ENCODE measurements at regions of chr1 and their contacts with region 1.

Region 1: GRCh38 chr1:244272471-244273261 is 179.0 kb downstream of the ADSS2 start:
- DNase-seq: peak; percentile 81
- ATAC-seq: peak; percentile 67
- H3K4me3 ChIP-seq: no peak overlapping the region
- H3K27ac ChIP-seq: no peak overlapping the region
- H3K4me1 ChIP-seq: peaks cover 9 to 15% of the 10 kb centered on the region in 2 experiments; a peak in 3 of 4 replicates
- H3K27me3 ChIP-seq: no peaks in the 10 kb centered on the region
- CTCF ChIP-seq: peak; percentile 87 to 100 (median 99)
- POLR2A ChIP-seq: no peak
- RAD21 ChIP-seq: peak; percentile 100

Region 2: DNA sequence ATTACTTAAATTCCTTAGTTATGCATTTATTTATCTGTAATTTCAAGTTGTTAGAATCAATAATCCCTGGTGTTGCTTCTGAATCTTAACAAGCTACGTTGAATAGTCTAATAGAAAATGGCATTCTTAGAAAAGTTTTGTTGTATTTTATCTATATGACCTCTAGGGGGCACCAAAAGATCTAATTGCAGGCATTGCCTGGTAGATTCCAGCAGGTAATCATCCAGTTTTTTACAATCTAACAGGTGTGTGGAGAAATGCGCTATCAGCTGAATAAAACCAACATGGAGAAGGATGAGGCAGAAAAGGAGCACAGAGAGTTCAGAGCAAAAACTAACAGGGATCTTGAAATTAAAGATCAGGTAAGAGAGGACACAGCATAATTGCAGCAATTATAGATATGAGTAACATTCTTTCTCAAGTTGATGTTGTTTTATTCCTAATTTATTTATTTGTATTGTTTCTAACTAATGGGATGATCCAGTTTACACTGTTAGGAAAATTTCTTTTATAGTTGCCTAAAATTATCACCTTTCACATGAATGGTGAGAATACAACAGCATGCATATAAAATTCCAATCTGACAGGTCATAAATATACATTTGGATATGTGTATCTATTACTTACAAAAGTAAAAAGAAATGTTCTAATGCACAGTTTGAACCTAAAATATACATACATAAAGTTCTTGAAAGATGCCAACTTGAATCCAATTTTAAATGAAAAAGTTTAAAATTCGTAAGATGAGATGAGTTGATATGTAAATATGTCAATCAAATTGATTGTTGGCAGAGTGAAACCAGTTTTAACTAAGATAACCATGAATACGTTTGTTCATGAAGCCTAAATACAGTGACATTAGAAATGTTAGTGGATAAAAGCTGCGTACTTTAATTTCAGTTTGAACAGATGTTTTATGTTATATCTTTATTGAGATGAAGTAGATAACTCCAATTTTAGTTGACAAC is 928.4 kb before region 1 on chr1:
- CTCF ChIA-PET with region 1: interaction called, 10 read pairs
- POLR2A ChIA-PET with region 1: no interaction called
- RAD21 ChIA-PET with region 1: no interaction called
- intact Hi-C with region 1: loop called (anchors 1 kb)
- DNase-seq: peak; percentile 8
- ATAC-seq: peak; percentile 59
- H3K4me3 ChIP-seq: no peak overlapping the region
- H3K27ac ChIP-seq: no peak overlapping the region
- H3K4me1 ChIP-seq: no peaks in the 10 kb centered on the region
- H3K27me3 ChIP-seq: no peaks in the 10 kb centered on the region
- CTCF ChIP-seq: peak; percentile 47 to 79 (median 75); a peak in 5 of 6 replicates
- POLR2A ChIP-seq: no peak
- RAD21 ChIP-seq: peak; percentile 78

Region 3: GRCh38 chr1:243708210-243708609 is 564.5 kb before region 1 on chr1:
- CTCF ChIA-PET with region 1: interaction called, 9 read pairs
- POLR2A ChIA-PET with region 1: no interaction called
- RAD21 ChIA-PET with region 1: interaction called in 1 of 2 experiments, 3 read pairs
- intact Hi-C with region 1: loop called (anchors 1 kb)
- DNase-seq: no peak
- ATAC-seq: no peak
- H3K4me3 ChIP-seq: no peak overlapping the region
- H3K27ac ChIP-seq: no peak overlapping the region
- H3K4me1 ChIP-seq: no peaks in the 10 kb centered on the region
- H3K27me3 ChIP-seq: peaks cover 54% of the 10 kb centered on the region
- CTCF ChIP-seq: peak in 2 of 3 experiments; percentile 46 to 62; a peak in 2 of 6 replicates
- POLR2A ChIP-seq: no peak
- RAD21 ChIP-seq: peak; percentile 65

Region 4: GRCh38 chr1:243748706-243749283 is 523.9 kb before region 1 on chr1:
- CTCF ChIA-PET with region 1: no interaction called
- POLR2A ChIA-PET with region 1: no interaction called
- RAD21 ChIA-PET with region 1: no interaction called
- intact Hi-C with region 1: loop called (anchors 1 kb)
- DNase-seq: peak; percentile 63
- ATAC-seq: peak; percentile 99
- H3K4me3 ChIP-seq: no peak overlapping the region
- H3K27ac ChIP-seq: no peak overlapping the region
- H3K4me1 ChIP-seq: no peaks in the 10 kb centered on the region
- H3K27me3 ChIP-seq: 0 out of 2 replicates have a peak, but pooled peaks cover 17% of the 10 kb centered on the region
- CTCF ChIP-seq: peak; percentile 54 to 69 (median 63); a peak in 5 of 6 replicates
- POLR2A ChIP-seq: no peak
- RAD21 ChIP-seq: peak; percentile 68

Region 5: GRCh38 chr1:243850452-243851256 is 422.0 kb before region 1 on chr1:
- CTCF ChIA-PET with region 1: no interaction called
- POLR2A ChIA-PET with region 1: no interaction called
- RAD21 ChIA-PET with region 1: no interaction called
- intact Hi-C with region 1: loop called (anchors 5 kb)
- DNase-seq: no peak
- ATAC-seq: peak; percentile 76
- H3K4me3 ChIP-seq: peak overlapping the region; percentile 13 to 20; a peak in 2 of 4 replicates
- H3K27ac ChIP-seq: no peak overlapping the region
- H3K4me1 ChIP-seq: no peaks in the 10 kb centered on the region
- H3K27me3 ChIP-seq: peaks cover 54% of the 10 kb centered on the region
- CTCF ChIP-seq: no peak
- POLR2A ChIP-seq: no peak
- RAD21 ChIP-seq: no peak

Region 6: DNA sequence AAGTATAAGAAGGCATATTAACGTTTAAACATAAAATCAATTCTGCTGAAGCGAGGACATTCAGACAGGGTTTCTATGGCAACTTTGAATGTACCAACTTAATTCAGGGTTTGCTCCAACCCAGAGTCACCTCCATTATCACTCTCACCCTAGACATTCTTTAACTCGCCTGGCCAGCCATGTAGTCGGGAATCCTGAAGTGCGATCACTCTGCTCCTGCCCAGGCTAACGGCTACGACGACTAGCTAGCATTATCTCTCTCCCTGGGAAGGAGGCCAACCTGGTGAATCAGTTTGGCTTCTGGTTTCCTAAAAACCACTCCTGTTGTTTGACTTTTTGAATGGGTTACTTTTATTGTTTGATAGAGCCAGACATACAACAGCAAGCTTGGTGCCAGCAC is 260.5 kb before region 1 on chr1:
- CTCF ChIA-PET with region 1: no interaction called
- POLR2A ChIA-PET with region 1: no interaction called
- RAD21 ChIA-PET with region 1: no interaction called
- intact Hi-C with region 1: loop called (anchors 10 kb)
- DNase-seq: no peak
- ATAC-seq: no peak
- H3K4me3 ChIP-seq: no peak overlapping the region
- H3K27ac ChIP-seq: no peak overlapping the region
- H3K4me1 ChIP-seq: no peaks in the 10 kb centered on the region
- H3K27me3 ChIP-seq: peaks cover 50% of the 10 kb centered on the region
- CTCF ChIP-seq: no peak
- POLR2A ChIP-seq: no peak
- RAD21 ChIP-seq: no peak

Region 7: DNA sequence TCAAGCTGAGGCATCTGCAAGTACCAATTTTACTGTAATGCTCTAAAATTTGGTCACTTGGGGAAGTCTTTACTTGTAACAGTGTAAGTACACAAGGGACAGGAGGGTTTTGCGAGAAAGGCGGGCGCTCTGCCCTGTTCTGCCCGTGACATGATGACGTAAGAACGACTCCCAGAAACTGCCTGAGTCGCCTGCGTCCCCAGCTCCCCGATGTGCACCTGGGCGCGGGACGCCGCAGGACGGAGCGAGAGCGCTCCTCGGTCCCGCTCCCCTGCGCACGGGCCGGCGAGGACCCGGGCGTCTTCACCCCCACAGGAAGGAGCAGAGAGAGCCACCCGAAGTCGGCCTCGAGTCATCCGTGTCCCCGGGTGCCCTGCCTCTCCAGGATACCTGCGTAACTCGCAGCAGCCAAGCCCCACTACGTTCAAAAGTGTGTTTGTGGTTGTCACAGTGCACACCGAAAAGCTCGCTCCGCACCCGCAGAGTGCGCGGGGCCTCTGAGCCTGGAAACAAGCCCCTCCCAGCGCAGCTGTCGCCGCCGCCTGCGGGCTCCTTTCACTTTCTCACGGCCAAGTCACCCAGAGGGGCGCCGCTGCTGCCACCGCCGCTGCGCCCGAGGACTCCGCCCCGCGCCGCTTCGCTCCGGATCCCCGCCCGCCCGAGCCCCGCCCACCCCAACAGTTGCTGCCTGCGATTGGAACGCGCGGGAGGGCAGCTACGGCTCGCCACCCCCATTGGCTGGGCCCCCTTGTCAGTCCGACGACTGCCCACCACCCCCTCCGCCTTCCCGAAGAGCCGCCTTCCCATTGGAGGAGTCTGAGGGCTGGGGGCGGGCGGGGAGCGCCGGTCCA is 224.8 kb before region 1 on chr1:
- CTCF ChIA-PET with region 1: no interaction called
- POLR2A ChIA-PET with region 1: no interaction called
- RAD21 ChIA-PET with region 1: no interaction called
- intact Hi-C with region 1: loop called (anchors 2 kb)
- DNase-seq: peak; percentile 94
- ATAC-seq: peak; percentile 96
- H3K4me3 ChIP-seq: peak overlapping the region; percentile 60 to 70
- H3K27ac ChIP-seq: no peak overlapping the region
- H3K4me1 ChIP-seq: peaks cover 8 to 14% of the 10 kb centered on the region in 2 experiments; a peak in 3 of 4 replicates
- H3K27me3 ChIP-seq: peaks cover 76% of the 10 kb centered on the region
- CTCF ChIP-seq: no peak
- POLR2A ChIP-seq: no peak
- RAD21 ChIP-seq: no peak

Region 8: DNA sequence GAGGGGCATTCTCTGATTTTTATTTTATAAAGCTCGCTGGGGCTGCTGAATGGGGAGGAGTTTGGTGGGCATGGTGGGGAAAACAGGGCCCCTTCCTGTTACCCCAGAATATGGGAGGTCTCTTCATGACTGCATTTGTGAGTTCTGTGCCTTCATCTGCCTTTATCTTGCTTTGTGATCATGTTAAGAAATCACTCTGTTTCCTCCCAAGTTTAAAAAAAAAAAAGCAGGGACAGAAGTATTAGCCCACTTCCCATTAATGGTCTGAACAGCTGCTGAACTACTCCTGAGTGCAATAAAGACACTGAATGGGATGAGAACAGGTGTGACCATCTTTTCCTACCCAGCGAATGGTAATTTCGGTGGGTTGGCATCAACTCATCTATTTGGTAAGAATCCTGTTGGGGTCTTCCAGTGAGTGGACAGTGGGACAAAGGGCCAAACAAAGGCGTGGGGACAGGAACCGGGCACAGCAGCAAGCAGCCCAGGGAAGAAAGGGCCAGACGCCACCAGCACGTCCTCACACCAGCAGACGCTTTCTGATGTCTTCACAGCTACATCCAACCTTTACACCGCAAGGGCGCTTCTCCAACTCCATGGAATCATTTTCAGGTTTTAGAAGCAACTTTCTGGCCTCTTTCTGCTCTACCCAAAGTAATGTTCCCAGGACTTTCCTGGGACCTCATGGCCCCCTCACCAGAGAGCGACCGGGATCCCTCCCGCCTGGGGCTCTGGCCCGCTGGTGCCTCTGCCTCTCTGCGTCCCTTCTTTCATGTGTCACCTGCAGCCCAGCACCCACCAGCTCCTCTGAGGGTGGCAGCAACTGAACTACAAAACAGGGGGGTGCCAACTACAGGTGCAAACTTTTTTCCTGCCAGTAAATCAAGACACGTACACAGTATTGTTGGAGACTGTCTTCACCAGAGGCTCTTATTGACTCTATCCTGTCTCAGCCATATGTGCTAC is 18.9 kb after region 1 on chr1:
- CTCF ChIA-PET with region 1: no interaction called
- POLR2A ChIA-PET with region 1: no interaction called
- RAD21 ChIA-PET with region 1: no interaction called
- intact Hi-C with region 1: no loop called
- DNase-seq: no peak
- ATAC-seq: no peak
- H3K4me3 ChIP-seq: no peak overlapping the region
- H3K27ac ChIP-seq: no peak overlapping the region
- H3K4me1 ChIP-seq: no peaks in the 10 kb centered on the region
- H3K27me3 ChIP-seq: no peaks in the 10 kb centered on the region
- CTCF ChIP-seq: no peak
- POLR2A ChIP-seq: no peak
- RAD21 ChIP-seq: no peak

Region 9: GRCh38 chr1:244536316-244536715 is 263.6 kb after region 1 on chr1:
- CTCF ChIA-PET with region 1: no interaction called
- POLR2A ChIA-PET with region 1: no interaction called
- RAD21 ChIA-PET with region 1: no interaction called
- intact Hi-C with region 1: no loop called
- DNase-seq: no peak
- ATAC-seq: no peak
- H3K4me3 ChIP-seq: no peak overlapping the region
- H3K27ac ChIP-seq: no peak overlapping the region
- H3K4me1 ChIP-seq: no peaks in the 10 kb centered on the region
- H3K27me3 ChIP-seq: no peaks in the 10 kb centered on the region
- CTCF ChIP-seq: no peak
- POLR2A ChIP-seq: no peak
- RAD21 ChIP-seq: no peak